Ovary (tissue), 10 donors: ENCODE measurements at regions of chr14 and their contacts with region 1.

Region 1: DNA sequence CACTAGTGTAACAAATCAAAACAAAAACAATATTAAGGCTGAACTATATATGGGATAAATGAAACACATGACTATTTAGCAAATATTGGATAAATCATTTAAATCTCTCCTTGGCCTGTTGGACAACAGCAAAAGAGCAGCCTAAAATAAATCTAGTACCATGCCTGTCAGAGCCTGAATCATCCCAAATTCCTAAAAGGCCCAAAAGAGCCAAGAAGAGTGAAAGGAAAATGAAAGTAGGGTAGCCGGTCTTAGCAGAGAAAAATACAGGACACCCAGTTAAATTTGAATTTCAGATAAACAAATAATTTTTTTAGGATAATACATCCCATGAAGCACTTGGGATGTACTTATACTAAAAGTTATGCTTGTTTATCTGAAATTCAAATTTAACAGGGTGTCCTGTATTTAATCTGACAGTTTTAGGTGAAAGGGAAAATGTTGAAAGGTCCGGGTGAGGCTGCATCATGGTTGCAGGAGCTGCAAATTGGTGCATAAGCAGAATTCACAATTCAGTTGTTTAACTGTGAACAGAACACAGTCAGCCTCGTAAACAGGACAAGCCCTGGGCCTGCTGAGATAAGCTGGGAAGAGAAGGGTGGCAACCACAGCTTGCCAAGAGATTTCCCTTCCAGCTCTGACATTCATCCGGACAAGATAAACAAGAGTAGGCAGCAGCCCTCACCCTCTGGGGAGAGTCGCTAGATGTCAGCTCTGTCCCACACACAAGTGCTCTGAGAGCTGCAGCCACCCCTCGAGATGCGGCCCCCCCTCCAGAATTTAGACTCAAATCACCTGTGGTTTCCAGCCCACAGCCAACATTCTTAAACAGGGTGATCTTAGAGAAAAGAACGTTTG is 30.3 kb downstream of the DMAC2L start:
- DNase-seq: peak; percentile 61 to 71 (median 68)
- H3K4me3 ChIP-seq: peak overlapping the region; percentile 24
- H3K27ac ChIP-seq: peak overlapping the region in 1 of 2 donors; percentile 49
- H3K4me1 ChIP-seq: peaks cover 28% of the 10 kb centered on the region
- H3K27me3 ChIP-seq: no peaks in the 10 kb centered on the region
- CTCF ChIP-seq: peak in 2 of 3 donors; percentile 18
- EP300 ChIP-seq: no peak
- POLR2A ChIP-seq: no peak

Region 2: GRCh38 chr14:50396631-50397390 is 54.4 kb after region 1 on chr14 and contains the start of gene CDKL1:
- intact Hi-C with region 1: loop called in 1 of 4 experiments (anchors 10 kb)
- DNase-seq: peak; percentile 61 to 83 (median 76)
- H3K4me3 ChIP-seq: peak within 1 kb of the TSS; percentile 55
- H3K27ac ChIP-seq: peak within 1 kb of the TSS; percentile 57 to 90
- H3K4me1 ChIP-seq: peaks cover 20% of the 10 kb centered on the region
- H3K27me3 ChIP-seq: no peaks in the 10 kb centered on the region
- CTCF ChIP-seq: no peak
- EP300 ChIP-seq: no peak
- POLR2A ChIP-seq: peak; percentile 48
- total RNA-seq, gene CDKL1: 17.6 to 69.3 (median 34.1) TPM

Region 3: DNA sequence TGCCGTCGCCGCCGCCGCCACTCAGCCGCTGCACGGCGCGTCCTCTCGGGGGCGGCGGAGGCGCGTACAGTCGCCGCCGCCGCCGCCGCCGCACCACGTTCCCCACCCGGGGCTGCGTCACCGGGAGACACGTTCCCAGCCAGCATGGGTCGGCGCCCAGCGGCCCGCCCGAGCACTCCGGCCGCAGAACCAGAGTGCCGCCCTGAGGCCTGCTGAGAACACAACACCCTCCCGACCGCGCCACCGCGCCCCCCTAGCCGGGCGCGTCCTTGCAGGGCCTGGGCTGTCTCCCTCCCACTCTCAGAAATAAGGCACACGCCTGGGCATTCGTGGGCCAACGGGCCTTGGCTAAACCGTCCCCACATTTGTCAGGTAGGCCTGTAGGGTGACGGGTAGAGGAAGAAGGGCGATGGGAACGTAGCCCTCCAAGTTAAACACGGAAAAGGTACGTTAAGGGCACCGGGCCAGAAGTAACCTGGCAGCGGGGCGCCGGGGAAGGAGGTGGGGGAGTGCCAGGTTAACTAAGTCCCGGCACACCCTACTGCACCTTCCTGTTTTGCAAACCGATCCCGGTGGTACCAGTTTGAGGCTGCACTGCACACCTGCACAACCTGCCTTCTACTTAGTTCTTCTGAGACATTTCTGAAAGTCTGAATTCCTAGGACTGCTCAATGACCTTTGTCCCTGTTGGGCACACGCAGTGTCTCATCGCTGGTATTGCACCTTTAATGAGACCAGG is 190.2 kb after region 1 on chr14 and contains the start of gene MAP4K5:
- intact Hi-C with region 1: loop called in 1 of 4 experiments (anchors 5 kb)
- DNase-seq: peak; percentile 90 to 93 (median 92)
- H3K4me3 ChIP-seq: peak within 1 kb of the TSS; percentile 85
- H3K27ac ChIP-seq: peak within 1 kb of the TSS; percentile 93 to 97
- H3K4me1 ChIP-seq: peaks cover 11% of the 10 kb centered on the region
- H3K27me3 ChIP-seq: no peaks in the 10 kb centered on the region
- CTCF ChIP-seq: peak; percentile 60 to 98 (median 98)
- EP300 ChIP-seq: no peak
- POLR2A ChIP-seq: peak; percentile 70
- total RNA-seq, gene MAP4K5: 60.8 to 202 (median 69.8) TPM

Region 4: GRCh38 chr14:50667996-50668825 is 325.8 kb after region 1 on chr14 and contains the start of gene SAV1:
- intact Hi-C with region 1: loop called in 1 of 4 experiments (anchors 5 kb)
- DNase-seq: peak; percentile 85 to 91 (median 89)
- H3K4me3 ChIP-seq: peak within 1 kb of the TSS; percentile 79
- H3K27ac ChIP-seq: peak within 1 kb of the TSS; percentile 94 to 99
- H3K4me1 ChIP-seq: peaks cover 2% of the 10 kb centered on the region
- H3K27me3 ChIP-seq: no peaks in the 10 kb centered on the region
- CTCF ChIP-seq: peak in 2 of 3 donors; percentile 16 to 33
- EP300 ChIP-seq: peak; percentile 65
- POLR2A ChIP-seq: peak; percentile 92
- total RNA-seq, gene SAV1: 35.3 to 49.9 (median 45.8) TPM